Heart right ventricle (tissue), 16 donors: ENCODE measurements at regions of chr2 and their contacts with region 1.

Region 1: DNA sequence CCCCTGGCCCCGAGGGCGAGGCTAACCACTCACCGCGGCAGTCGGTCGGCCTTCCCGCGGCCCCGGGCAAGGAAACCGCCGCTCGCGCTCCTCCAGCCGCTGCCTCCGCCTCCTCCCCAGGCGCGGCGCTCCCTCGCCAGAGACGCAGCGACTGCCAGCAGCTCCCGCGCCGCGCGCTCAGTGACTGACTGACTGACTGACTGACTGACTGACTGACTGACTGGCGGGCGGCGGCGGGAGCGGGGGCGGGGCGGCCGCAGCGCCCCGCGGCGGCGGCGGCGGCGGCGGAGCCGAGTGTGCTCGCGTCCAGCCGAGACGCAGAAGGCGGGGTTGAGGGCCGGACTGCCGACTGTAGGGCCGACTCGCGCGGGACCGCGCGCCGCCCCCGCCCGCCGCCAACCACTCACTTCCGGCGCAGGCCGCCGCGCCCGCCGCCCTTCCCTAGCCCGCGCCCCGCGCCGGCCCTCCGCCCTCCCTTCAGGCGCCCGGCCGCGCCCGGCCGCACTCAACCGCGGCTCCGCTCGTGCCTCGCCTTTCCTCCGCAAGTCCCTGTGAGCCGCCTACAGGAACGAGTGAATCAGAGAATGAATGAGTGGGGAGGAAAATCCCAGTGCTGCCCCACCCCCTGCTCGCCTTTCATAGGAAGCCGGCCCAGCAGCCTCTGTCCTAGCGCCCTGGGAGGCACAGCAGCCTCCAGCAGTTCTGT is at the start of gene RAPH1:
- DNase-seq: peak; percentile 88 to 90
- ATAC-seq: peak; percentile 87 to 98 (median 93)
- H3K4me3 ChIP-seq: peak within 1 kb of the TSS; percentile 79 to 99 (median 90)
- H3K27ac ChIP-seq: peak within 1 kb of the TSS; percentile 86 to 98 (median 96)
- H3K4me1 ChIP-seq: peaks cover 0 to 42% (median 28%) of the 10 kb centered on the region in 9 donors
- H3K27me3 ChIP-seq: peaks cover 0 to 21% (median 0%) of the 10 kb centered on the region in 7 donors
- CTCF ChIP-seq: peak in 1 of 9 donors; percentile 23
- total RNA-seq, gene RAPH1: 11.8 to 20.6 (median 16.4) TPM

Region 2: GRCh38 chr2:203427061-203427460 is 108.2 kb before region 1 on chr2:
- intact Hi-C with region 1: no loop called
- DNase-seq: no peak
- ATAC-seq: peak in 1 of 8 donors; percentile 48
- H3K4me3 ChIP-seq: no peak overlapping the region
- H3K27ac ChIP-seq: no peak overlapping the region
- H3K4me1 ChIP-seq: peaks cover 0 to 4% (median 0%) of the 10 kb centered on the region in 9 donors
- H3K27me3 ChIP-seq: no peaks in the 10 kb centered on the region
- CTCF ChIP-seq: no peak

Region 3: DNA sequence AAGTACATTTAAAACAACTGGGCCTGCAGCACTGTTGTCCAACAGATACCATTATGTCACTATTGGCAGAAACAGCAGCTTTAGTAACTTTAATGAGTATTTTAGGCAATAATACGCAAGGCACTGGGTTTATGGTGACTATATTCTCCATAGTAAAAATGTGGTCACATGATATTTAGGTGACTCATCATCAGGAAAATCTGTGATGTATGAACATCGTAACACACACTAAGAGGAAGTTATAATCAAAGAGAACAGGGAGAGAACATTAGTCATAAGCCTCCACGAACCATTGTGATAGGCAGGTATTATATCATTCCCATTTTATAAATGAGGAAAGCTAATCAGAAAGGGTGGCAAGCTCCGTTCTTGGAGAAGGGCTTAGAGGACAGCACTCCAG is 37.1 kb before region 1 on chr2:
- intact Hi-C with region 1: loop called in 2 of 10 experiments (anchors 5 kb)
- DNase-seq: no peak
- ATAC-seq: peak in 6 of 8 donors; percentile 41 to 85 (median 64)
- H3K4me3 ChIP-seq: no peak overlapping the region
- H3K27ac ChIP-seq: peak overlapping the region in 4 of 10 donors; percentile 3 to 24 (median 10)
- H3K4me1 ChIP-seq: peaks cover 0 to 54% (median 14%) of the 10 kb centered on the region in 9 donors
- H3K27me3 ChIP-seq: no peaks in the 10 kb centered on the region
- CTCF ChIP-seq: no peak

Region 4: DNA sequence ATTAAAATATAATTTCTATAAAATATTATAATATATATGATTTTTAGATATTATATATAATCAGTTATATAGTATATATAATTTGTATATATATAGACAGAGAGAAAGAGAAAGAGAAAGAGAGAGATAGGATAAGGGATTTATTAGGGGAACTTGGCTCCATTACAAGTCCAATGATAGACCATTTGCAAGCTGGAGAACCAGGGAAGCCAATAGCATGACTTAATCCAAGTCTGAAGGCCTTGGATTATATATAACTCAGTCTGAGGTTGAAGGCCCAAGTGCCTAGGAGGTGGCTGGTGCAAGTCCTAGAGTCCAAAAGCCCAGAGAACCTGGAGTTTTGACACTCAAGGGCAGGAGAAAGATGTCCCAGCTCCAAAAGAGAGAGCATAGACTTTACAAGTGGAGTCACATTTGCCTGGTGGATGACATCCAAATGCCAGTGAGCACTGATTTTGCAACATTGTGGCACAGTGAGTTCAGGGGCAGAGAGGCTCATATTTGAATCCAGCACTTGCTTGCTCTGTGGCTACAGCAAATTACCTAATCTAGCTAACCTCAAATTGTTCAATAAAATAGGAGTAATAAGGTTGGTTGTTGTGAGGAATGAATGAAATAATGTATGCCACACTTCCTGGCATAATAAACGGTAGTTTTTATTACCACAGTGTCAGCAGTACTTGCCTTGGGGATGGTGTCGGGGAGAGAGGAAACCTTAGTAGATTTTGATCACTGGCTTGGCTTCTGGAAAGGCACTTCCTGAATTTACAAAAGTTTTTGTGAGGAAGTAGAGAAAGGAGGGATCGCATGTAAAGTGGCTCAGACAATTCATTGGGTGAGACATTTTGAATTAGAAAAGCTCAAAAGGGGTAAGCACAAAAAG is 101.6 kb after region 1 on chr2:
- intact Hi-C with region 1: loop called in 3 of 10 experiments (anchors 5 to 10 kb)
- DNase-seq: no peak
- ATAC-seq: peak in 6 of 8 donors; percentile 38 to 94 (median 74)
- H3K4me3 ChIP-seq: no peak overlapping the region
- H3K27ac ChIP-seq: peak overlapping the region in 9 of 10 donors; percentile 0 to 76 (median 33)
- H3K4me1 ChIP-seq: peaks cover 7 to 23% (median 17%) of the 10 kb centered on the region in 9 donors
- H3K27me3 ChIP-seq: no peaks in the 10 kb centered on the region
- CTCF ChIP-seq: no peak

Region 5: DNA sequence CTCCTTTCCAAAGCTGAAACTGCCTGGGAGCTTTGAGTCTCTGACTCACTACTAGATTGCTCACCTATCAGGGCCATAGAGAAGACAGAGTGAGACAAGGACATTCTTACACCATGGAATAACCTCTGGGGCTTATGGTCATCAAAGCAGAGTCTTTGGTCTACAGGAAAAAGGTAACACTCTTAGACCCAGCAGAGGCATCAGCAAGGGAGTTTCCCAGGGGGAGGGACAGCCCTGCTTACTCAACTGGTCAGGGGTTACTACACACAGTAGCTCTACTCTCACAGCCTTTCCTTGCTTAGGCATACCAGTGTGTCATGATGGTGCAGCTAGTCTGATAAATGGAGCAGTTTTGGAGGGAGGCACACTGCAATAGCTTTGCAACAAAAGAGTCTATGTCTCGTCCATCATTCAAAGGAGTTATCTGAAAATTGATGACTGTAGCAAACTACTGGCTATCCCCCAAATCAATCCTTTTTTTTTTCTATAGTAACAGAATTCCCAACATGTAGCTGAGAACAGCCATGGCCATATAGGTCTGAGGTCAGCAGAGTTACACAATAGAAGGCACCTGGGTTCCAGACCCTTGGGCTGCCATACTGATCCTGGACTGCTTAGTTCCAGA is 148.8 kb after region 1 on chr2:
- intact Hi-C with region 1: loop called in 2 of 10 experiments (anchors 5 kb)
- DNase-seq: no peak
- ATAC-seq: peak in 6 of 8 donors; percentile 3 to 60 (median 12)
- H3K4me3 ChIP-seq: no peak overlapping the region
- H3K27ac ChIP-seq: peak overlapping the region; percentile 82 to 91 (median 86)
- H3K4me1 ChIP-seq: peaks cover 43 to 87% (median 79%) of the 10 kb centered on the region in 9 donors
- H3K27me3 ChIP-seq: no peaks in the 10 kb centered on the region
- CTCF ChIP-seq: no peak

Region 6: GRCh38 chr2:203804070-203804469 is 268.8 kb after region 1 on chr2:
- intact Hi-C with region 1: loop called in 1 of 10 experiments (anchors 10 kb)
- DNase-seq: peak in 1 of 2 donors; percentile 54
- ATAC-seq: peak; percentile 47 to 94 (median 80)
- H3K4me3 ChIP-seq: no peak overlapping the region
- H3K27ac ChIP-seq: peak overlapping the region in 5 of 10 donors; percentile 4 to 54 (median 29)
- H3K4me1 ChIP-seq: peaks cover 0 to 46% (median 0%) of the 10 kb centered on the region in 9 donors
- H3K27me3 ChIP-seq: no peaks in the 10 kb centered on the region
- CTCF ChIP-seq: no peak